OCI-LY7 (cell line): ENCODE measurements at regions of chr2 and their contacts with region 1.

Region 1: GRCh38 chr2:27095745-27096651 is 9.4 kb downstream of the KHK start:
- DNase-seq: peak; percentile 75
- H3K4me3 ChIP-seq: peak overlapping the region; percentile 54
- H3K27ac ChIP-seq: no peak overlapping the region
- H3K4me1 ChIP-seq: peaks cover 14% of the 10 kb centered on the region
- CTCF ChIP-seq: no peak

Region 2: GRCh38 chr2:27191053-27191829 is 95.2 kb after region 1 on chr2:
- CTCF ChIA-PET with region 1: no interaction called
- POLR2A ChIA-PET with region 1: no interaction called
- intact Hi-C with region 1: loop called (anchors 1 kb)
- DNase-seq: peak; percentile 89
- H3K4me3 ChIP-seq: no peak overlapping the region
- H3K27ac ChIP-seq: peak overlapping the region; percentile 32
- H3K4me1 ChIP-seq: peaks cover 56% of the 10 kb centered on the region
- CTCF ChIP-seq: peak; percentile 97

Region 3: GRCh38 chr2:27281855-27282559 is 186.0 kb after region 1 on chr2 and contains the start of gene TRIM54:
- CTCF ChIA-PET with region 1: interaction called, 17 read pairs
- POLR2A ChIA-PET with region 1: no interaction called
- intact Hi-C with region 1: loop called (anchors 1 kb)
- DNase-seq: no peak
- H3K4me3 ChIP-seq: no peak within 1 kb of the TSS
- H3K27ac ChIP-seq: no peak within 1 kb of the TSS
- H3K4me1 ChIP-seq: peaks cover 40% of the 10 kb centered on the region
- CTCF ChIP-seq: no peak
- total RNA-seq, gene TRIM54: 2.1 and 6.4 TPM in 2 replicates

Region 4: DNA sequence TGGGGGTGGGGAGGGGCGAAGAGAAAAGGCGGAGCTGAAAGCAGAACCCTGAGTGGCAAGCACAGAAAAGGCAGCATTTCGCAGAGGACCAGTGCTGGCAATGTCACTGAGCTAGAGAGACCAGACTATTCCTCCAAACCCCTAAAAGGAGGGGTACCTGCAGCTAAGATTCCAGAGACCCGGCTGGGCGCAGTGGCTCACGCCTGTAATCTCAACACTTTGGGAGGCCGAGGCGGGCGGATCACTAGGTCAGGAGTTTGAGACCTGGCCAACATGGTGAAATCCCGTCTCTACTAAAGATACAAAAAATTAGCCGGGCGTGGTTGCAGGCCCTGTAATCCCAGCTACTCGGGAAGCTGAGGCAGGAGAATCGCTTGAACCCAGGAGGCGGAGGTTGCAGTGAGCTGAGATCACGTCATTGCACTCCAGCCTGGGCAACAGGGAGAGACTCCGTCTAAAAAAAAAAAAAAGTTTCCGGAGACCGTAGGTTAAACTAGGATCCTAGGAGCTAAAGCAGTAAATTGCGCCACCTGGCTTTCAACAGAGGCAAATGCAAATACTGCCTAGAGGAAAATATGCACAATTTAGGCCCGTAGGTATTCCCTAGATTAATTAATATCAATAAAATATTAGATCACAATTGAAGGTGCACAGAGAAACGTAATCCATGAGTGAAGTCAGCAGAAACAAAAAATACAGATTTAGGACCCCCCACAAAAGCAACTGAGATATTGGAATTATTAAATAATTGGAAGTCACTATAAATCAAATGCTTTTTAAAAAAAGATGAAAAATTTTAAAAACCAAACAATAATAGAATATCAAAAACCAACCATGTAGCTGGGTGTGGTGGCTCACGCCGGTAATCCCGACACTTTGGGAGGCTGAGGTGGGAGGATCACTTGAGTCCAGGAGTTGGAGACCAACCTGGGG is 207.4 kb after region 1 on chr2:
- CTCF ChIA-PET with region 1: interaction called, 4 read pairs
- POLR2A ChIA-PET with region 1: no interaction called
- intact Hi-C with region 1: loop called (anchors 1 kb)
- DNase-seq: peak; percentile 90
- H3K4me3 ChIP-seq: peak overlapping the region; percentile 61
- H3K27ac ChIP-seq: peak overlapping the region; percentile 43
- H3K4me1 ChIP-seq: peaks cover 14% of the 10 kb centered on the region
- CTCF ChIP-seq: peak; percentile 92